ENCODE measurements at regions of chr2 and their contacts with region 1.

Region 1: DNA sequence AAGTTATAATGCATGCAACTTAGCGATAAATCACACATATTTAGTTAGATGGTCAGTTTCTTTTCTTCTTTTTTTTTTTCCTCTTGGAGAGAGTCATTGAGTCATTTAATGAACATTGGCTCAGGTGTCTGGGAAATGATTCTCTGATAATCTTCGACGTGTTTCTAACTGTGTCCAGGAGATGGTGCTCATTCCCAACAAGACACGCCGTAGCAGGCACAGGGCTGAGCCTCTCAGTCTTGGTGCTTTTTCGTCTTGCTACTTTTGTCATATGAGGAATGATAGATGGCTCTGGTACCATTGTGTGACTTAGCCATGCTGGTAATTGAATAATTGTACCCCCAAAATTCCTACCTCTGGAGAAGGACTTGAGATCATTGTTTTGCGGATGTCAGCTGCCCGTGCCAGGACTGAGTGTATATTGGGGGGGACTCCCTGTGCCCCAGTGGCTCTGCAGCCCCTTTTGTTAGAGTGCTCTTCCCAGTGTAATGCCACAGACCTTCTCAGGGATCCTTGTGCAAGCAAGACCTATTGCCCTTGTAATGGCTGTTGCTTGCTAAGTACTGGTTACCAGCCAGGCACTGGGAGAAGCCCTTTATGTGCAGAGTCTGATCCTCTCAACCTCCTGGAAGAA is 107.6 kb upstream of the CYRIA start:
- DNase-seq: peak; percentile 60 to 70
- H3K4me3 ChIP-seq: no peak overlapping the region
- H3K4me1 ChIP-seq: no peaks in the 10 kb centered on the region
- H3K27me3 ChIP-seq: peaks cover 8% of the 10 kb centered on the region; the same call in 1 of the 2 replicates

Region 2: GRCh38 chr2:15577071-15577735 is 1196.0 kb before region 1 on chr2:
- in situ Hi-C with region 1: no loop called
- DNase-seq: peak; percentile 60 to 97
- H3K4me3 ChIP-seq: no peak overlapping the region
- H3K4me1 ChIP-seq: no peaks in the 10 kb centered on the region
- H3K27me3 ChIP-seq: no peaks in the 10 kb centered on the region

Region 3: DNA sequence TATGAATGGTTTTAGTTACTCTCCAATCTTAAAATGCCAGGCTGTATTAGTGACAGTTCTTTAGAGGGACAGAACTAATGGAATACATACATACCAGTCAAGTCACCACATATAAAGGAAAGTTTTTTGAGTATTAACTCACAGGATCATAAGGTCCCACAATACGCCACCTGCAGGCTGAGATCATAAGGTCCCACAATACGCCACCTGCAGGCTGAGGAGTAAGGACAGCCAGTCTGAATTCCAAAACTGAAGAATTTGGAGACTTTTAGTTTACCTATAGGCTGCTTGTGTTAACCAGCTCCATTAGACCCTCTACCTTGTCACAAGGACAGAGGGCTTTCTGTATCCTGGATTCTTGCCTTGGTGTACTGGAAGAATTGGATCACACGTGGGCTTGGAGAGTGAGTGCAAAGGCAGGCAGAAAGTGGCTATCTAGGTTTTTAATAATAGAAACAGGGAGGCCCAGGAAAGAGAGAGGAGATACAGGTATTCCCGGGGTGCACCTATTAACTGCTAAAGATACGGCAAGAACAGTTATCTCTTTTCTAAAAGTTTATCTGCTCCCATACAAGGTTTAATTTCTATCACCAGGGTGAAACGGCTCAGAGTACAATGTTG is 127.3 kb after region 1 on chr2:
- in situ Hi-C with region 1: loop called (anchors 10 kb)
- DNase-seq: peak; percentile 15 to 69
- H3K4me3 ChIP-seq: no peak overlapping the region
- H3K4me1 ChIP-seq: no peaks in the 10 kb centered on the region
- H3K27me3 ChIP-seq: no peaks in the 10 kb centered on the region

Region 4: DNA sequence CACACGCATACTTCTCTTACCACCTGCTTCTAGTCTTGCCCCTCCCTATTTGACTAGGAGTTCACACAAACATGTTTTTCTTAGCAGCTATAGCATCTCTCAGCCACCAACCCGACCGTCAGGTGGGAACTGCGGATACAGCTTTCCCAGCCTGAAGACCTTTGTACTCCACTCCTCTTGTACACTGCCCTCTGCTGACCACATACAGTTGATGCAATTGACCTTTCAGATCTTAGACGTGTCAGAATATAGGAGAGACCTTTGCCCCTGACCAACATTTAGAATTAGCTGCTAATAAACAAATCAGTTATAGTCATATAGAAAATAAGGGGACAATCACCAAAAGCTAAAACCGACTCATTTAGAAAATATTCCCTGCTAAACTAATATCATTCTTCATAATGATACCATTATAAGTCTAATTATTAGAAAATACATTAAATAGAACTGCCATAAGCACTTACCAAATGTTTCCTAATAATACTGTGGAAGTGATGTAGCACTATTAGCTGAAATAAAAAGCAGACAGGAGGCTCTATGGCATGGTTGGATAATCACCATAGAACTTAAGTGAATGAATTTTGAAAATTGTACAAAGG is 536.6 kb after region 1 on chr2:
- in situ Hi-C with region 1: loop called (anchors 10 kb)
- DNase-seq: peak; percentile 49 to 68
- H3K4me3 ChIP-seq: no peak overlapping the region
- H3K4me1 ChIP-seq: no peaks in the 10 kb centered on the region
- H3K27me3 ChIP-seq: no peaks in the 10 kb centered on the region; the same call in 1 of the 2 replicates

Region 5: DNA sequence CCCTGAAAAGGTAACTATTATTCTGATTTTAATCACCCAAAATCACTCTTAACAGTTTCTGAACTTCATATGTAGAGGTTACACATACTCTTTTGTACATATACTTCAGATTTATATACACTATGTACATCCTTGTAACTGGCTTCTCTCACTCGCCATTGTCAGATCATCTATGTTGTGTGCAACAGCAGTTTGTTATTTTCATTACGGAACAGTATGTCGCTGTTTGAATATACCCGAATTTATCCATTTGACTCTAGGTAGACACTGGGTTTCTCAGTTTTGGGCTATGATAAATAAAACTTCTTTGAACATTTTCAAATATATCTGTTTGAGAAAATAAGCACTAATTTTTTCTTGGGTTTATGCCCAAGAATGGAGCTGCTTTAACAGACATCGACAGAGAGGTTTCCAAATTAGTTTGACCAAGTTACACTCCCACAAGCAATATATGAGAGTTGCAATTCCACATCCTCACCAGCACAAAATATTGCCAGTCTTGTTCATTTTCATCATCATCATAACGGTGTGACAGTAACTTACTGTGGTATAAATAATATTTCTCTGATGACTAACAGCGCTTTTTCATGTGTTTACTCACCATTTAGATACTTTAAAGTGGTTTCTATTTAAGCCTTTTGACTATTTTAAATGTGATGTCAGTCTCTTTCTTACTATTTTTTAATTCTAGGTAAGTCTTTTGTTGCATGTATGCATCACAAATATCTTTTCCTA is 899.6 kb after region 1 on chr2:
- in situ Hi-C with region 1: loop called (anchors 10 kb)
- DNase-seq: no peak
- H3K4me3 ChIP-seq: no peak overlapping the region
- H3K4me1 ChIP-seq: no peaks in the 10 kb centered on the region
- H3K27me3 ChIP-seq: no peaks in the 10 kb centered on the region

Measured in HAP-1 (cell line).